HCT116 (cell line): ENCODE measurements at regions of chr22 and their contacts with region 1.

Region 1: DNA sequence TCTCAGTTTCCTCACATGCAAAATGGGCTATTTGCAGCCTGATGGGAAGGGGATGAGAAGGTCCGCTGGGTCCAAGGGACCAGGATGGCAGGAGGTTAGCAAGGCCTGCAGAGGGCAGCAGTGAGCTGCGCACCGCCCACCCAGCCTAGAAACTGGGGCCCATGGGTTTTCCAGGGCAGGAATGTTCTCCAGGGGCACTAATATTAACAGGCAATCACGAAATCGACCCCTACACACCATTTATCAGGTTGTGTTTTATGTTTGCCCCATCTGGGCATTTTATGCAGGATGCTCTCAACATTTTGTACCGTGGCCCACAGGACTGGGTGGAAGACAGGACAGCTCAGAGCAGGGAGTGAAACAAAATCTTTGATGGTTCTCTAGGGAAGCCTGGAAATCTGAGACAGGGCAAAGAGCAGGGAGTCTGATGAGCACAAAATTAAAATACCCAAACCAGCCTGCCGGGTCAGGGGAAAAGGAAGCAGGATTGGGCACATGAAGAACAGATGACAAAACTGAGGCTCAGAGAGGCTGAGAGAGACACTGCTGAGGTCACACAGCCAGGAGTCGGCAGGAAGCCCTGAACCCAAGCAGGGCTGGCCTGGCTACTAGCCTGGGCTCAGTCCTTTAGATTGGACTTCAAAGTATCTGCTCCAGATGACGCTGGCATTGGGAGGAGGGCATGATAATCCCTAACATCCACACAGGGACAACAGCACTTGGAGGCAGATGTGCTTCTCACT is 1.6 kb upstream of the BCR start:
- DNase-seq: peak; percentile 27
- ATAC-seq: peak; percentile 50
- H3K4me3 ChIP-seq: no peak overlapping the region
- H3K27ac ChIP-seq: no peak overlapping the region
- H3K4me1 ChIP-seq: peaks cover 31 to 46% of the 10 kb centered on the region in 2 experiments
- H3K27me3 ChIP-seq: no peaks in the 10 kb centered on the region
- CTCF ChIP-seq: peak; percentile 82 to 98 (median 93)
- POLR2A ChIP-seq: no peak
- RAD21 ChIP-seq: peak; percentile 88

Region 2: GRCh38 chr22:23152315-23153113 is 26.2 kb before region 1 on chr22:
- CTCF ChIA-PET with region 1: no interaction called
- POLR2A ChIA-PET with region 1: no interaction called
- RAD21 ChIA-PET with region 1: no interaction called
- intact Hi-C with region 1: no loop called
- DNase-seq: no peak
- ATAC-seq: no peak
- H3K4me3 ChIP-seq: no peak overlapping the region
- H3K27ac ChIP-seq: no peak overlapping the region
- H3K4me1 ChIP-seq: peaks cover 4 to 13% of the 10 kb centered on the region in 2 experiments; a peak in 3 of 4 replicates
- H3K27me3 ChIP-seq: no peaks in the 10 kb centered on the region
- CTCF ChIP-seq: no peak
- POLR2A ChIP-seq: no peak
- RAD21 ChIP-seq: no peak

Region 3: GRCh38 chr22:23289851-23290724 is 111.4 kb after region 1 on chr22:
- CTCF ChIA-PET with region 1: interaction called, 14 read pairs
- POLR2A ChIA-PET with region 1: no interaction called
- RAD21 ChIA-PET with region 1: no interaction called
- intact Hi-C with region 1: no loop called
- DNase-seq: no peak
- ATAC-seq: peak; percentile 89
- H3K4me3 ChIP-seq: no peak overlapping the region
- H3K27ac ChIP-seq: no peak overlapping the region
- H3K4me1 ChIP-seq: no peaks in the 10 kb centered on the region
- H3K27me3 ChIP-seq: no peaks in the 10 kb centered on the region
- CTCF ChIP-seq: peak; percentile 39 to 95 (median 78); a peak in 5 of 6 replicates
- POLR2A ChIP-seq: no peak
- RAD21 ChIP-seq: 0 out of 2 replicates have a peak, but pooled peaks have one; percentile 19

Region 4: GRCh38 chr22:23385291-23386244 is 206.9 kb after region 1 on chr22:
- CTCF ChIA-PET with region 1: interaction called, 12 read pairs
- POLR2A ChIA-PET with region 1: no interaction called
- RAD21 ChIA-PET with region 1: interaction called in 1 of 2 experiments, 3 read pairs
- intact Hi-C with region 1: loop called (anchors 5 kb)
- DNase-seq: peak; percentile 61
- ATAC-seq: peak; percentile 95
- H3K4me3 ChIP-seq: no peak overlapping the region
- H3K27ac ChIP-seq: no peak overlapping the region; the same call in 1 of the 2 replicates
- H3K4me1 ChIP-seq: no peaks in the 10 kb centered on the region
- H3K27me3 ChIP-seq: no peaks in the 10 kb centered on the region
- CTCF ChIP-seq: peak; percentile 94 to 98 (median 96)
- POLR2A ChIP-seq: no peak
- RAD21 ChIP-seq: peak; percentile 93